ENCODE measurements at regions of chr19 and their contacts with region 1.

Region 1: GRCh38 chr19:12796146-12797071 is 5.1 kb downstream of the JUNB start:
- DNase-seq: peak; percentile 90
- ATAC-seq: peak; percentile 21

Region 2: DNA sequence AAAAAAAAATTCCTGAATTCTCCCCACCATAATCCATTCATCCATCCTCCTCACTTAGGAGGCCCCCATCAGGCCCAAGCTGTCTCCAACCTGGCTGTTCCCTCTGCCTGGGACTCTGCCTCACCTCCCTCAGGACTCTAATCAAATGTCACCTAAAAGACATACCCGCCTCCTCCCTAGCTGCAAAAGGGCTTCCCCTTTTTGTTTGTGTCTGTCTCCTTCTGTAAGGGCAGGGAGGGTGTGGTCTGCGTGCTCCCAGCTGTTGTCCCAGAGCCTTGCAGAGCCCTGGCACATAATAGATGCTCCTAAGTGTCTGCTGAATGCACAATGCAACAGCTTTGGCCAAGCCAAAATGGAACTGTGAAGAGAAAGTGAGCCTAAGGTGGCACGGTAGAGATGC is 66.4 kb before region 1 on chr19:
- intact Hi-C with region 1: no loop called
- DNase-seq: no peak
- ATAC-seq: no peak

Region 3: GRCh38 chr19:12766051-12766521 is 30.3 kb before region 1 on chr19:
- intact Hi-C with region 1: loop called (anchors 2 kb)
- DNase-seq: peak; percentile 95
- ATAC-seq: peak; percentile 88

Region 4: GRCh38 chr19:12777217-12778016 is 19.0 kb before region 1 on chr19:
- intact Hi-C with region 1: loop called (anchors 1 kb)
- DNase-seq: peak; percentile 92
- ATAC-seq: peak; percentile 56